ENCODE measurements at regions of chrX and their contacts with region 1.

Region 1: GRCh38 chrX:13051529-13052172 is 7.2 kb upstream of the FAM9C start:
- DNase-seq: peak; percentile 87
- H3K4me3 ChIP-seq: no peak overlapping the region
- H3K27ac ChIP-seq: peak overlapping the region; percentile 43
- H3K4me1 ChIP-seq: peaks cover 14% of the 10 kb centered on the region
- H3K27me3 ChIP-seq: no peaks in the 10 kb centered on the region
- CTCF ChIP-seq: no peak
- POLR2A ChIP-seq: no peak

Region 2: GRCh38 chrX:12988797-12989196 is 62.9 kb before region 1 on chrX:
- CTCF ChIA-PET with region 1: no interaction called
- POLR2A ChIA-PET with region 1: no interaction called
- dilution Hi-C with region 1: no loop called
- intact Hi-C with region 1: no loop called
- DNase-seq: peak; percentile 73
- H3K4me3 ChIP-seq: no peak overlapping the region
- H3K27ac ChIP-seq: peak overlapping the region; percentile 32
- H3K4me1 ChIP-seq: peaks cover 24% of the 10 kb centered on the region
- H3K27me3 ChIP-seq: no peaks in the 10 kb centered on the region
- CTCF ChIP-seq: no peak
- POLR2A ChIP-seq: no peak

Region 3: DNA sequence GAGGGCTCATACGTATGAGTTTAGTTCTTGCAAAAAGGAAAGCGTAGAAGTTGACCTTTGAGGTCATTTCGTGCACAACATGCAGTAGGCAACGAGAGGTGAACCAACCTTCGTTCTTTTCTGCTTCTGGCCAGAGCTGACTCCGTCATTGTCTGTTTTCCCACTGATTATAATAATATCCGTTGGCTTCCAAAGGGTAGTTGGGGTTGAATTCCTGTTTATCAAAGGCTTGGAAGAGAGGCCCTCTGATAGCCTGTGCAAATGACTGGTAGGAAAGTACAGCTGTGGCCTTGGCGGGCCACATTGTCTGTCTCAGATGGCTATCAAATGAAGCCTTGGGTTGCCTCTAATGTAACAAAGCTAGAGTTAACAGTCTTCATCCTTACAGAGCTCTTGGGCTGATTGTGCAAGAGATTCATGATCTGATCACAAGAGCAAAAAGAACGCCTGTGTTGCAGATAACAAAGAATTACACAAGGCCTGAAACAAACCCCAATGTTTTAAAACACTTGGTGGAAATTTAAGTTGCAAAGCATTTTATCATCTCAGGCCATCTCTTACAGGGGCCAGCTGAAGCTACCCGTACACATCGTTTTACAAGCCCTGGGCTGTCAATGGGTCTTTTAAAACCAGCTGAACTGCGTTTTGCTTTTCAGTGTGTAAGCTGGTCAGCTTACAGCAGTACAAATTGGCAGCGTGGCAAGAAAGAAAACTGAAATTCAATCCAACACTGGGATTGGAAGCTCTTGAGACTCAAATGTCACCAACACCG is 38.9 kb after region 1 on chrX:
- CTCF ChIA-PET with region 1: no interaction called
- POLR2A ChIA-PET with region 1: no interaction called
- dilution Hi-C with region 1: no loop called
- intact Hi-C with region 1: loop called (anchors 2 kb)
- DNase-seq: peak; percentile 87
- H3K4me3 ChIP-seq: no peak overlapping the region
- H3K27ac ChIP-seq: peak overlapping the region; percentile 64
- H3K4me1 ChIP-seq: peaks cover 40% of the 10 kb centered on the region
- H3K27me3 ChIP-seq: no peaks in the 10 kb centered on the region
- CTCF ChIP-seq: no peak
- POLR2A ChIP-seq: no peak

Region 4: DNA sequence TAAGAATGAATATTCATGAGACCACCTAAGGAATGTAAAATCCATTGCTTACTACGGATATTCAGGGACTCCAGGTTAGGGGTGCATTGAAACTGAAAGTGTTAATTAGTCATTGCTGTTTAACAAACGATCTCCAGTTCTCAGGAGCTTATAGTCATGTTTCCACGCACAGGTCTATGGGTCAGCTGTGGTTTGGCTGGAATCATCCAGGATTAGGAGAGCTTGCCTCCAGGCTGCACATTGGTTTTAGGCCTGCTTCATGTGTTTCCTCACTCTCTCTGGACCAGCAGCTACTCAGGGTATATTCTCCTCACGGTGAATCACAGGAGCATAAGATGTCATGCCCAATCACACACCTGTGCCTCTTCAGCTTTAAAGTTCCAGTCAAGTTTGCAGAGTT is 169.3 kb after region 1 on chrX:
- CTCF ChIA-PET with region 1: no interaction called
- POLR2A ChIA-PET with region 1: no interaction called
- dilution Hi-C with region 1: no loop called
- intact Hi-C with region 1: no loop called
- DNase-seq: peak; percentile 21
- H3K4me3 ChIP-seq: no peak overlapping the region
- H3K27ac ChIP-seq: no peak overlapping the region
- H3K4me1 ChIP-seq: peaks cover 19% of the 10 kb centered on the region
- H3K27me3 ChIP-seq: no peaks in the 10 kb centered on the region
- CTCF ChIP-seq: no peak
- POLR2A ChIP-seq: no peak

Region 5: GRCh38 chrX:13322804-13323203 is 271.2 kb after region 1 on chrX:
- CTCF ChIA-PET with region 1: no interaction called
- POLR2A ChIA-PET with region 1: no interaction called
- dilution Hi-C with region 1: no loop called
- intact Hi-C with region 1: no loop called
- DNase-seq: no peak
- H3K4me3 ChIP-seq: no peak overlapping the region
- H3K27ac ChIP-seq: no peak overlapping the region
- H3K4me1 ChIP-seq: no peaks in the 10 kb centered on the region
- H3K27me3 ChIP-seq: no peaks in the 10 kb centered on the region
- CTCF ChIP-seq: no peak
- POLR2A ChIP-seq: no peak

Region 6: DNA sequence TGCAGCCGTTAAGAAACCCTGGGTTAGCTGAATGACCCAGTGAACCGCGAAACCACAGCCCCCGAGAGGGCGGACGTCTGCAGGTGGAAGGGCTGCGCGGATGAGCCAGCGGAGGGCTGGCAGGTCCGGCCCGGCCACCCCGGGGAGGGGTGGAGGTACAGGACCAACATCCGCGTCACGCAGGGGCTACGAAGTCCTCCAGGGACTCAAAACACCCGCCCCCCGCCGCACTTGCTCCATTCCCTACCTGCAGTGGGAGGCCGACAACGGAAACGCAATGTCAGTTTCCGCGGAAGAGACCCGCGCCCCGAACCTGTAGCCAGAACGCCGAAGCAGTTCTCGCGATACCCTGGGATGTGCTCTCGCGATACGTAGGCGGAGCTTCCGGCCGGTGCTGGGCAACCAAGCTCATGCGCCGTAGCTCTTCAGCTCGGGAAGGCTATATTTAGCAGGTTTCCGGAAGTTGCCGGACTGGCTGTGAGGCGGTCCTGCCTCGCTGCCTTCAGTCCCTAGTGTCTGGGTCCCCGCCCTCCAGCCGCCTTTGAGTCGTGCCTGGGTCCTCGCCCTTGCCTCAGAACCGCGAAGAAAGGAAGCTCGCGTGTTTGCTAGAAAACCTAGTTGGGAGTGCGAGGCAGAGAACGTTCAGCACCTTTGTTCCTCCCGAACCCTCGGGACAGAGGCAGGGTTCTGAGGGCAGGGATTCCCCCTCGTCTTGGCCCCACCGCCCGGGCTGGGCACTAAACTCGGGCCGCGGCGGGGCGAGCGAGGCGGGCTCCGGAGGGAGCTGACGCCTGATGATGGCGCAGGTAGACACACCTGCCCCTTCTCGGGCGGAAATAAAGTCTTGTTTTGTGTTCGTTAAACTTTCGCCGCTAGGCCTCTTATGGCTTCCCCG is 682.9 kb after region 1 on chrX and contains the starts of genes OFD1 and TRAPPC2:
- CTCF ChIA-PET with region 1: no interaction called
- POLR2A ChIA-PET with region 1: no interaction called
- dilution Hi-C with region 1: no loop called
- intact Hi-C with region 1: no loop called
- DNase-seq: peak; percentile 91
- H3K4me3 ChIP-seq: peak within 1 kb of the TSS; percentile 73 to 88 (median 83)
- H3K27ac ChIP-seq: peak within 1 kb of the TSS; percentile 78
- H3K4me1 ChIP-seq: peaks cover 5% of the 10 kb centered on the region
- H3K27me3 ChIP-seq: no peaks in the 10 kb centered on the region
- CTCF ChIP-seq: no peak
- POLR2A ChIP-seq: peak; percentile 71
- total RNA-seq, gene OFD1: 12.0 and 14.4 TPM in 2 replicates
- total RNA-seq, gene TRAPPC2: 13.0 and 14.1 TPM in 2 replicates

Measured in endothelial cell of umbilical vein (primary cell).